ENCODE measurements at regions of chr9 and their contacts with region 1.

Region 1: GRCh38 chr9:109903515-109904138 is 123.6 kb downstream of the PALM2AKAP2 start:
- DNase-seq: peak; percentile 13 to 56
- H3K4me3 ChIP-seq: no peak overlapping the region
- H3K27ac ChIP-seq: no peak overlapping the region
- H3K4me1 ChIP-seq: peaks cover 0 to 5% (median 0%) of the 10 kb centered on the region in 4 experiments; a peak in 2 of 7 replicates
- H3K27me3 ChIP-seq: no peaks in the 10 kb centered on the region
- CTCF ChIP-seq: peak; percentile 54 to 88 (median 86)
- EP300 ChIP-seq: no peak
- POLR2A ChIP-seq: no peak
- RAD21 ChIP-seq: peak; percentile 96 to 98

Region 2: DNA sequence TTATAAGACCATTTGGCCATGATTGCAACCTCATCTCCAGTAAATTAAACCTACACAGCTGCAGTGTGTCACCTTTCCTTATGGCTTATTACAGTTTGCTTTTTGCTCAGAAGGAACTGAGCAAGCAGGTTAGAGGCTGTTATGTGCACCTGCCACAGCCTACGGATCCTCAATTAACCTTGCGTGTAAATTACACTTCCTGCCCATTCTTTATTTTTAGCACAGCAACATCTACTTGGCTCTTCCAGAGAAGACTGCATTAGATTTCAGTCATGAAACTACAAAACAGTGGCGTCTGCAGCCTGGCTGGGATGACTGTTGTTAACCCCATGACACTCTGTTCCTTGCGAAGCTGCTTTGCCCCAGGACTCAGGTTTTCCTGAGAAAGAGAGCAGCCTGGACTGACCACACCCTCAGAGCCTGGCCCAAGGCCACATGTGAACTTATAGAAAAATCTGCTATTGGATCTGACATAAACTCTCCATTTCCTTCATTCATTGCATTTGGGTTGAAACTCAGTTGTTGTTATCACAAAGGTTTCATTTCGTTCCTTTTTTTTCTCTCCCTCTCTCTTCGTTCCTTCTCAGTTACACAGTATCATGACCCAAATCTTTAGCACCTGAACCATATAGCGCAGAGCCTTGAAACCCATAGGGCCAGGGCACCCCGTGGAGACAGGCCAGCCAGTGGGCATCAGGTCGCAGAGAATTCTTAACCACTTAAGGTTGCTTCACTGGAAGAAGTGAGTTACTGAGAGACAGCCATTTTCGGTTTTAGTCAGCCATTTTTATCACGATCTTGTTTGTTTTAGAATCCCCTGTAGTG is 14.9 kb after region 1 on chr9:
- CTCF ChIA-PET with region 1: interaction called, 43 read pairs
- POLR2A ChIA-PET with region 1: interaction called, 3 read pairs
- DNase-seq: no peak
- H3K4me3 ChIP-seq: no peak overlapping the region
- H3K27ac ChIP-seq: no peak overlapping the region
- H3K4me1 ChIP-seq: peaks cover 0 to 2% (median 0%) of the 10 kb centered on the region in 4 experiments; a peak in 1 of 7 replicates
- H3K27me3 ChIP-seq: no peaks in the 10 kb centered on the region
- CTCF ChIP-seq: no peak
- EP300 ChIP-seq: no peak
- POLR2A ChIP-seq: no peak
- RAD21 ChIP-seq: no peak

Region 3: GRCh38 chr9:110048403-110048975 is 144.9 kb after region 1 on chr9:
- CTCF ChIA-PET with region 1: interaction called, 127 read pairs
- POLR2A ChIA-PET with region 1: interaction called, 3 read pairs
- DNase-seq: peak; percentile 49 to 81
- H3K4me3 ChIP-seq: peak overlapping the region; percentile 68 to 99 (median 86)
- H3K27ac ChIP-seq: peak overlapping the region; percentile 75; the same call in 1 of the 2 replicates
- H3K4me1 ChIP-seq: peaks cover 4 to 10% (median 7%) of the 10 kb centered on the region in 4 experiments; a peak in 6 of 7 replicates
- H3K27me3 ChIP-seq: peaks cover 0 to 12% (median 7%) of the 10 kb centered on the region in 4 experiments; a peak in 4 of 7 replicates
- CTCF ChIP-seq: no peak
- EP300 ChIP-seq: no peak
- POLR2A ChIP-seq: peak in 1 of 2 experiments; percentile 24; a peak in 2 of 3 replicates
- RAD21 ChIP-seq: no peak

Region 4: GRCh38 chr9:110116543-110116885 is 212.9 kb after region 1 on chr9:
- CTCF ChIA-PET with region 1: interaction called, 10 read pairs
- POLR2A ChIA-PET with region 1: no interaction called
- DNase-seq: no peak
- H3K4me3 ChIP-seq: no peak overlapping the region
- H3K27ac ChIP-seq: no peak overlapping the region
- H3K4me1 ChIP-seq: peaks cover 9 to 27% (median 19%) of the 10 kb centered on the region in 4 experiments
- H3K27me3 ChIP-seq: no peaks in the 10 kb centered on the region
- CTCF ChIP-seq: no peak
- EP300 ChIP-seq: no peak
- POLR2A ChIP-seq: no peak
- RAD21 ChIP-seq: no peak

Region 5: DNA sequence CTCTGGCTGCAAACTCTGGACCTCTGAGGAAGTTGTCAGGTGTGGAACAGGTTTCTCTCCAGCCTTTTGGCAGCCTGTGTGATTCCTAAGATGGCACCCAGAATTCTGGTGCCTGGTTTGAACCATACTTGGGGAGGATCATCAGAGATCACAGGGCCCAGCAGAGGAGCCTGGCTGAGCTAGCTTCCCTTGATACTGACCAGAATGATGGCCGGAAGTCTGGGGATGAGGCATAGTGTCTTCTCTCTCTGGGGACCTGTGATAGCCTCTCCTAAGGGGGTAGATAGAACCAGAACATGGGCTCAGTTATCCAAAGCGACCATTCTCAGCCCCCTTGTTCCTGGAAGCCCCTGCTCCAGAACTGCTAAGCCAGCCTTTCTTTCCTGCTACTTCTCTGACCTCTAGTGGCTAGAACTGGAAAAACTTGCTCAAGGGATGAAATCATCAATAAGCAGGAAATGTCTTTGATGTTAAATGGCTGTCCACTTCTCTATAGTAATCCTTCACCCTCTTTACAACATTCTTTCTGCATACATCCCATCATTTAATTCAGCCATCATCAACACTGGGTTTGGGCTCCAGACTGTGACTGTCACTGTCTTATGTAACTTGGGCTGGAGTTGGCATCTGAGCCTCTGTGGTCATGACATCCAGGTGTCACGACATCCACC is 249.2 kb after region 1 on chr9:
- CTCF ChIA-PET with region 1: interaction called, 55 read pairs
- POLR2A ChIA-PET with region 1: no interaction called
- DNase-seq: peak in 1 of 2 experiments; percentile 53
- H3K4me3 ChIP-seq: no peak overlapping the region
- H3K27ac ChIP-seq: no peak overlapping the region
- H3K4me1 ChIP-seq: peaks cover 0 to under 1% (median under 1%) of the 10 kb centered on the region in 4 experiments; a peak in 2 of 7 replicates
- H3K27me3 ChIP-seq: no peaks in the 10 kb centered on the region
- CTCF ChIP-seq: peak in 2 of 3 experiments; percentile 78 to 80; a peak in 3 of 4 replicates
- EP300 ChIP-seq: no peak
- POLR2A ChIP-seq: no peak
- RAD21 ChIP-seq: peak; percentile 95 to 96